ENCODE measurements at regions of chr6 and their contacts with region 1.

Region 1: GRCh38 chr6:30915591-30915946 is 1.5 kb downstream of the VARS2 start:
- DNase-seq: peak in 1 of 3 donors; percentile 49
- ATAC-seq: peak; percentile 35
- H3K4me3 ChIP-seq: no peak overlapping the region
- H3K4me1 ChIP-seq: peaks cover 15% of the 10 kb centered on the region
- CTCF ChIP-seq: peak; percentile 25

Region 2: DNA sequence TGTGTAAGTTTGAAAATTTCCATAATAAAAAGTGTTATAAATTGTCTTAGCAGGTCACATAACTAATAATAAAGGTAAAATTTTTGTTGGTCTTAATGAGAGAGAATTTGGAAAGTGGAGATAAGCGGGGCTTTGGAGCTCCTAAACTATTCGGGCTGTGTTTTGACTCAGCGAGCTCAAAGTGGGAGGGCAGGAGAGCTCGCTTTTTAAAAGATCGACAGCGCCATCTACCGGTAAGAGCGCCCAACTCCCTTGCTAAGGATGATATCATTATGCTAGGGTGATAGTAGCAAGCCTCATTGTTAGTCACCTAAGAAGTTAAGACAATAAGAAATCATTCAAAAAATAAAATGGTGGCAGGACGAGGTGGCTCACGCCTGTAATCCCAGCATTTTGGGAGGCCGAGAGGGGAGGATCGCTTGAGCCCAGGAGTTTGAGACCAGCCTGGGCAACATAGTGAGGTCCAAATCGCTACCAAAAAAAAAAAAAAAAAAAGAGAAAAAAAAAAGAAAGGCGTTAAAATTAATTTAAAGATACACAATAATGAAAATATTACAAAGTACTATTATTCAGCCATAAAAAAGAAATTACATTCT is 172.0 kb after region 1 on chr6:
- intact Hi-C with region 1: loop called in 1 of 2 experiments (anchors 5 kb)
- DNase-seq: peak; percentile 60 to 95 (median 87)
- ATAC-seq: peak; percentile 92
- H3K4me3 ChIP-seq: no peak overlapping the region
- H3K4me1 ChIP-seq: peaks cover 8% of the 10 kb centered on the region
- CTCF ChIP-seq: peak; percentile 70

Region 3: GRCh38 chr6:31426395-31427354 is 511.1 kb after region 1 on chr6:
- intact Hi-C with region 1: no loop called
- DNase-seq: no peak
- ATAC-seq: no peak
- H3K4me3 ChIP-seq: no peak overlapping the region
- H3K4me1 ChIP-seq: no peaks in the 10 kb centered on the region
- CTCF ChIP-seq: no peak

Measured in mucosa of descending colon (tissue), 3 donors.